ENCODE measurements at regions of chr9 and their contacts with region 1.

Region 1: GRCh38 chr9:4713849-4714248 is 27.2 kb downstream of the AK3 start:
- DNase-seq: no peak
- H3K4me3 ChIP-seq: no peak overlapping the region
- H3K4me3 Mint-ChIP-seq: no peak overlapping the region
- H3K27ac ChIP-seq: no peak overlapping the region
- H3K27ac Mint-ChIP-seq: peak overlapping the region in 3 of 8 donors; percentile 0 to 59 (median 10)
- H3K4me1 ChIP-seq: no peaks in the 10 kb centered on the region
- H3K4me1 Mint-ChIP-seq: no peaks in the 10 kb centered on the region
- H3K27me3 ChIP-seq: no peaks in the 10 kb centered on the region
- H3K27me3 Mint-ChIP-seq: no peaks in the 10 kb centered on the region

Region 2: GRCh38 chr9:4689687-4690104 is 24.2 kb before region 1 on chr9:
- CTCF ChIA-PET with region 1: no interaction called
- POLR2A ChIA-PET with region 1: interaction called, 10 read pairs
- DNase-seq: no peak
- H3K4me3 ChIP-seq: no peak overlapping the region
- H3K4me3 Mint-ChIP-seq: no peak overlapping the region
- H3K27ac ChIP-seq: no peak overlapping the region
- H3K27ac Mint-ChIP-seq: peak overlapping the region in 4 of 8 donors; percentile 48 to 87 (median 70)
- H3K4me1 ChIP-seq: peaks cover 5% of the 10 kb centered on the region
- H3K4me1 Mint-ChIP-seq: peaks cover 41 to 69% (median 67%) of the 10 kb centered on the region in 3 donors
- H3K27me3 ChIP-seq: no peaks in the 10 kb centered on the region
- H3K27me3 Mint-ChIP-seq: no peaks in the 10 kb centered on the region

Region 3: DNA sequence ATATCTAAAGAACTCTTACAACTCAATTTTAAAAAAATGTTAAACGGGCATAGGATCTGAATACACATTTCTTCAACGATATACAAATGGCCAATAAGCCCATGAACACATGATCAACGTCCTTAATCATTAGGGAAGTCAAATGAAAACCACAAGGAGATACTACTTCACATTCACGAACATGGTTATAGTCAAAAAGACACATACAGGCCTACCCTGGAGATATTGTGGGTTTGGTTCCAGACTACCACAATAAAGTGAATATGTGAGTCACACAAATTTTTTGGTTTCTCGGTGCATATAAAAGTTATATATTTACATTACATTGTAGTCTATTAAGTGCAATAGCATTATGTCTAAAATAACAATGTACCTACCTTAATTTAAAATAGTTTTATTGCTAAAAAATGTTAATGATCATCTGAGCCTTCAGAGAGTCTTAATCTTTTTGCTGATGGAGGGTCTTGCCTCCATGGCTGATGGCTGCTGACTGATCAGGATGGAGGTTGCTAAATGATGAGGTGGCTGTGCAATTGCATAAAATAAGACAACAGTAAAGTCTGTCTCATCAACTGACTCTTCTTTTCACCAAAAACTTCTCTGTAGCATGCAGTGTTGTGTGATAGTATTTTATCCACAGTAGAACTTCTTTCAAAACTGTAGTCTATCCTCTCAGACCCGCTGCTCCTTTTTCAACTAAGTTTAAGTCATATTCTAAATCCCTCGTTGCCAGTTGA is 12.0 kb after region 1 on chr9:
- CTCF ChIA-PET with region 1: no interaction called
- POLR2A ChIA-PET with region 1: no interaction called
- DNase-seq: no peak
- H3K4me3 ChIP-seq: no peak overlapping the region
- H3K4me3 Mint-ChIP-seq: no peak overlapping the region
- H3K27ac ChIP-seq: no peak overlapping the region
- H3K27ac Mint-ChIP-seq: peak overlapping the region in 4 of 8 donors; percentile 8 to 71 (median 48)
- H3K4me1 ChIP-seq: no peaks in the 10 kb centered on the region
- H3K4me1 Mint-ChIP-seq: peaks cover 25 to 52% (median 40%) of the 10 kb centered on the region in 3 donors
- H3K27me3 ChIP-seq: no peaks in the 10 kb centered on the region
- H3K27me3 Mint-ChIP-seq: no peaks in the 10 kb centered on the region

Region 4: GRCh38 chr9:4832786-4833579 is 119.1 kb after region 1 on chr9:
- CTCF ChIA-PET with region 1: no interaction called
- POLR2A ChIA-PET with region 1: no interaction called
- DNase-seq: no peak
- H3K4me3 ChIP-seq: no peak overlapping the region
- H3K4me3 Mint-ChIP-seq: no peak overlapping the region
- H3K27ac ChIP-seq: no peak overlapping the region
- H3K27ac Mint-ChIP-seq: no peak overlapping the region
- H3K4me1 ChIP-seq: no peaks in the 10 kb centered on the region
- H3K4me1 Mint-ChIP-seq: peaks cover 0 to 2% (median 0%) of the 10 kb centered on the region in 3 donors
- H3K27me3 ChIP-seq: no peaks in the 10 kb centered on the region
- H3K27me3 Mint-ChIP-seq: no peaks in the 10 kb centered on the region

Measured in CD8-positive, alpha-beta memory T cell (primary cell).